ENCODE measurements at regions of chr1 and their contacts with region 1.

Region 1: DNA sequence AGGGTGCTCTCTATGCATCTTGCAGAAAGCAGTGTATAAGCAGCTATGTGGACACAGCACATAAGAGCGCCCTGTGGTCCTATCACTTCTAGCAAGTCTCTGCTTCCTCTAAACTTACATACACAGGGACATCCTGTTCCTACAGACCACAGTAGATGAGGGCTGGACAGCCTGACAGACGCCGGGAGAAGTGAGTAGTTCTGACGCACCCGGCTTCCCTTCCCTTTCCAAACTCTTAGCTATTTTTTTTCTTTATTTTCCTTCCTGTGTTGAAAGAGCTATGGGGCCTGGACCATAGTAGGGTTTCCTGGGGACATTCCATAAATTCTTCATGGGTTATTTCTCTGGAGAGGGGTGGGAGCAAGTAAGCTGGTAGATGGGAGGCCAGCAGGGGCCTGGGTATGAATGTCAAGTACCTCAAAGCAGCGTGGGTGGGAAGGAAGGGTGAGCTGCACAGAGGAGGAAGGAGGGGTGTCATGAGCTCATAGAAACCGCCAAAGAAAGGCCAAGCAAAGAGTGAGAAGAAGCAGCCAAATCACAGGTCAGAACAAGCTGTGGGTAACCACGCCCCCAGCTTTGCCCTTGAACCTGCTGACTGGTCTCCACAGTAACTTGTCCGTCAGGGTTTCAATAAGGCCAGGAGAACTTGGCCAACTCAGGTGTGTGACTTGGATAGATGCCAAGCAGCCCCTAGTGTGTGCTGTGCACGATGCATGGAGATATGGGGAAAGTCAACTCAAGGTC is 36.6 kb downstream of the PLXNA2 start:
- DNase-seq: peak; percentile 55 to 90
- H3K4me3 ChIP-seq: no peak overlapping the region
- H3K27ac ChIP-seq: peak overlapping the region; percentile 59 to 92
- H3K4me1 ChIP-seq: peaks cover 23 to 57% of the 10 kb centered on the region in 2 donors
- H3K27me3 ChIP-seq: no peaks in the 10 kb centered on the region
- CTCF ChIP-seq: no peak

Region 2: GRCh38 chr1:208149776-208150514 is 57.6 kb before region 1 on chr1:
- intact Hi-C with region 1: no loop called
- DNase-seq: no peak
- H3K4me3 ChIP-seq: no peak overlapping the region
- H3K27ac ChIP-seq: no peak overlapping the region
- H3K4me1 ChIP-seq: peaks cover 0 to 13% of the 10 kb centered on the region in 2 donors
- H3K27me3 ChIP-seq: no peaks in the 10 kb centered on the region
- CTCF ChIP-seq: no peak

Region 3: GRCh38 chr1:208238710-208239472 is 31.3 kb after region 1 on chr1:
- intact Hi-C with region 1: loop called (anchors 1 kb)
- DNase-seq: peak in 1 of 2 donors; percentile 67
- H3K4me3 ChIP-seq: peak overlapping the region in 1 of 2 donors; percentile 10
- H3K27ac ChIP-seq: peak overlapping the region; percentile 14 to 58
- H3K4me1 ChIP-seq: peaks cover 28 to 45% of the 10 kb centered on the region in 2 donors
- H3K27me3 ChIP-seq: no peaks in the 10 kb centered on the region
- CTCF ChIP-seq: peak; percentile 44 to 85 (median 80)

Region 4: DNA sequence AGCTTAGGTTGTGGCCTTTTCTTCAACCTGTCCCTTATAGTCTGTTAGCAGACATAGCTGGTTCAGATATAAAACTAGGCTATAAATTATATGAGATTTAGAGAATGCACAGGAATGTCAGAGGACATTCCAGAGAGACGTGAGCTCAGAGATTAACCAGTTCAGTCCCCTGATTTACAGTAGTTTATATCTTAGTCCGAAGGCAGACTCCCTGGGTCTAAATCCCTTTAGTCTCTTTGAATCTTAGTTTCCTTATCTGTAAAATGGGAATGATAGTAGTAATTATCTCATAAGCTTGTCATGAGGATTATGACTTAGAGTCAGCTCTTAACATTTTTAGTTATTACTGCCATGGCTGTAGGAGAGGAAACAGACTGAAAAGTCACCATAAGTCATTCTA is 82.2 kb after region 1 on chr1:
- intact Hi-C with region 1: no loop called
- DNase-seq: no peak
- H3K4me3 ChIP-seq: no peak overlapping the region
- H3K27ac ChIP-seq: no peak overlapping the region
- H3K4me1 ChIP-seq: no peaks in the 10 kb centered on the region
- H3K27me3 ChIP-seq: no peaks in the 10 kb centered on the region
- CTCF ChIP-seq: no peak

Measured in ascending aorta (tissue), 2 donors.